ENCODE measurements at regions of chr7 and their contacts with region 1.

Region 1: GRCh38 chr7:28626624-28627262 is 214.4 kb downstream of the CREB5 start:
- DNase-seq: peak; percentile 25
- ATAC-seq: peak; percentile 62; the same call in 2 of the 3 replicates
- H3K4me3 ChIP-seq: no peak overlapping the region
- H3K27ac ChIP-seq: no peak overlapping the region
- H3K4me1 ChIP-seq: no peaks in the 10 kb centered on the region
- H3K27me3 ChIP-seq: no peaks in the 10 kb centered on the region
- CTCF ChIP-seq: 0 out of 2 replicates have a peak, but pooled peaks have one; percentile 17
- EP300 ChIP-seq: no peak
- POLR2A ChIP-seq: no peak
- RAD21 ChIP-seq: no peak

Region 2: GRCh38 chr7:28298870-28299518 is 327.7 kb before region 1 on chr7:
- CTCF ChIA-PET with region 1: interaction called, 3 read pairs
- POLR2A ChIA-PET with region 1: no interaction called
- in situ Hi-C with region 1: loop called (anchors 10 kb)
- intact Hi-C with region 1: loop called (anchors 1 kb)
- DNase-seq: peak; percentile 29
- ATAC-seq: peak; percentile 80
- H3K4me3 ChIP-seq: no peak overlapping the region
- H3K27ac ChIP-seq: no peak overlapping the region
- H3K4me1 ChIP-seq: no peaks in the 10 kb centered on the region
- H3K27me3 ChIP-seq: no peaks in the 10 kb centered on the region; a peak in 1 of 5 replicates
- CTCF ChIP-seq: peak; percentile 43
- EP300 ChIP-seq: no peak
- POLR2A ChIP-seq: no peak
- RAD21 ChIP-seq: no peak

Region 3: GRCh38 chr7:28389504-28390395 is 237.0 kb before region 1 on chr7:
- CTCF ChIA-PET with region 1: interaction called, 24 read pairs
- POLR2A ChIA-PET with region 1: no interaction called
- in situ Hi-C with region 1: loop called (anchors 5 kb)
- intact Hi-C with region 1: loop called (anchors 1 kb)
- DNase-seq: peak; percentile 29
- ATAC-seq: no peak
- H3K4me3 ChIP-seq: no peak overlapping the region
- H3K27ac ChIP-seq: no peak overlapping the region
- H3K4me1 ChIP-seq: no peaks in the 10 kb centered on the region
- H3K27me3 ChIP-seq: no peaks in the 10 kb centered on the region; a peak in 1 of 5 replicates
- CTCF ChIP-seq: peak; percentile 46
- EP300 ChIP-seq: no peak
- POLR2A ChIP-seq: no peak
- RAD21 ChIP-seq: no peak

Region 4: DNA sequence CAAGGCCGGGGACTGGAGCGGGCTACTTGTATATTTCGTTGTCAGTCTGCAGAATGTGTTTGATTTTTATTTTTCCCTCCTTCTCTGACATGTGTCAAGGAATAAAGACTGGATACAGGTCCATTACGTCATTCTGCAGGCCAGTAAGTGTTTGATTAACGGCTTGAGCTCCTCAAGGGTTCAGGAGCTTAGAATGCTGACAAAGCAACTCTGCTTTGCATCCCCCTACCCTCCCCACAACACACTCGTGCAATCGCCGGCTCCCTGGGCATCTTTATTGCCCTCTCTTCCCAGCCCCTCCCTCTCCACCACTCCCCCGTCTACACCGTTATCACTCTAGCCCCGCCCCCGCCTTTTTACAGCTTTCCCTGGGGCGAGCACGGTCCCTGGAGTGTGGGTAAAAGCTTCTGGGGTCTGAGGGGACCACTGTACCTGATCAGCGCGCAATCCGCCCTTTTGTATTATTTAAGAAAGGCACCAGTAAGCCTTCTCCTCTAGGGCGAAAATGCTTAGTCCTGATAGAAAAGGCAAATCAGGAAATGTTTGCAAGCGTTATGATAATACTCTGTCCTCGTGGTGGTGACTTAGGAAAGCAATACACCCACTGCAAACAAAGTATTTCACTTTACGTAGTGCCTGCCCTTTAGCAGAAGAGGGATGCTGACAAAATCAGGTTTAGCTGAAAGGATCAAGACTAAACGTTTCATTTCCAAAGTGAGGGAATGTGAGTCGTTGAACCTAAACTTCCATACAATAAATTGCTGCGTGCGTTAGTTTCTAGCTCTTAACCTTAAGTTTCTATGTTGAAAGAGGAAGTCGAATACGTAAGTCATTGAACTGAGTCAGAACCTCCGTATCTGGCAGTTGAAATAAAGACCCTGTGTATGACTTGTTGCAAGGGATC is 215.9 kb before region 1 on chr7:
- CTCF ChIA-PET with region 1: no interaction called
- POLR2A ChIA-PET with region 1: no interaction called
- in situ Hi-C with region 1: no loop called
- intact Hi-C with region 1: no loop called
- DNase-seq: no peak
- ATAC-seq: no peak
- H3K4me3 ChIP-seq: peak overlapping the region in 1 of 3 experiments; percentile 58; a peak in 1 of 6 replicates
- H3K27ac ChIP-seq: no peak overlapping the region
- H3K4me1 ChIP-seq: 0 out of 2 replicates have a peak, but pooled peaks cover 7% of the 10 kb centered on the region
- H3K27me3 ChIP-seq: peaks cover 2 to 35% of the 10 kb centered on the region in 2 experiments
- CTCF ChIP-seq: no peak
- EP300 ChIP-seq: no peak
- POLR2A ChIP-seq: no peak
- RAD21 ChIP-seq: no peak

Region 5: DNA sequence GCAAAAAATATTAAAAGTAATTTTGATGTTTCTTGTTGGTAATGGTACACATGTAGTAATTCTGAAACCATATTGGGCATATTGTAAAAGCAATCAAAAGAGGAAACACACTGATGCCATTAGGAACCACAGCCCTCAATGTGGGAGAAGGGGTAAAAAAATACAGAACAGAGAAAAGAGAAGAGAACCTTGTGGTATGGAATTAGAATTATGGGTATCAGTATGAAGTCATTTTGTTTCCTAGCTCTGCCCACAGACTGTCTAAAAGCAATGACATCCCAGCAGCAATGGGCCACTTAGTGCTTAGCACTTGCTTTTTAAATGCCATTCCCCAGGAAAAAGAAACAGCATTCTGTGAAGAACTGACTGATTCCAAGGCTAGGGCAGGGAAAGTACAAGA is 458.1 kb after region 1 on chr7:
- CTCF ChIA-PET with region 1: no interaction called
- POLR2A ChIA-PET with region 1: no interaction called
- in situ Hi-C with region 1: no loop called
- intact Hi-C with region 1: no loop called
- DNase-seq: no peak
- ATAC-seq: no peak
- H3K4me3 ChIP-seq: no peak overlapping the region
- H3K27ac ChIP-seq: no peak overlapping the region
- H3K4me1 ChIP-seq: no peaks in the 10 kb centered on the region
- H3K27me3 ChIP-seq: no peaks in the 10 kb centered on the region
- CTCF ChIP-seq: no peak
- EP300 ChIP-seq: no peak
- POLR2A ChIP-seq: no peak
- RAD21 ChIP-seq: no peak